ENCODE measurements at regions of chrX and their contacts with region 1.

Region 1: DNA sequence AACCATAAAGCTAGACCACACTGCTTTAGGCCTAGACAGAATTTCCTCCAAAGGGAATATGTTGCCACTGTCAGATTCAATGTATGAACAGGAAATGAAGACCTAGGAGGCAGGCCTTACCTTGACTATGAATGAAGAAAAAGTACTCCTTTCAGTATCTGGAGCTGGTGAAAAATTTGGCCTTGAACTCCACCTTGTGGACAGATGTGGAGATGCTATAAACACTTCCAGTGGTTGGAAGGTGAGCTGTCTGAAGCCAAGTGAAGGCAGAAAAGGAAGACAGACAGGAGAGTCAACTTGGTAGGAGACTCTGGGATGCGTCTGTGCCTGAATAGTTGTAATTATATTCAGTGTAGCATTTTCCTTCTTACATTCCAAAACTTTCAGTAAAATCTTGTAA is 17.2 kb downstream of the SPIN3 start:
- DNase-seq: peak; percentile 16
- H3K4me3 ChIP-seq: no peak overlapping the region
- H3K27ac ChIP-seq: no peak overlapping the region
- H3K4me1 ChIP-seq: no peaks in the 10 kb centered on the region
- H3K27me3 ChIP-seq: no peaks in the 10 kb centered on the region
- CTCF ChIP-seq: peak; percentile 35 to 54 (median 42)
- EP300 ChIP-seq: no peak
- POLR2A ChIP-seq: no peak

Region 2: DNA sequence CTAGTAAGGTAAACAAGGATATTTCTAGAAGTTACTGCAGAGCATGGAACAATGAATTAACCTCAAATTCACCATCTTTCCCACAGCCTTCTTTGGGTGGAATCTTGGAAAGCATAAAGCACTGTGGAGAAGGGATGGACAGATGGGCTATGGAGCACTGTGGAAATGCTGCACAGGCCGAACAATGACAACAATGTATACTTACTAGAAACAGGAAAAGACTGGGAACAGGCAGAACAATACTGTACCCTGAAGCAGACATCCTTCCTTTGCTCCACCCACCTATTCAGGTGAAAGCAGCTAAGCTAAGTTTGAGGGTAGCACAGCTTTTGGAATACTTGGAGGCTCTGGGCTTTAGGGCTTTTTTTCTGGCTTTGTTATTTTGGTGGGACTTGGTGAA is 996.6 kb before region 1 on chrX:
- in situ Hi-C with region 1: no loop called
- intact Hi-C with region 1: no loop called
- DNase-seq: no peak
- H3K4me3 ChIP-seq: no peak overlapping the region
- H3K27ac ChIP-seq: no peak overlapping the region
- H3K4me1 ChIP-seq: no peaks in the 10 kb centered on the region
- H3K27me3 ChIP-seq: no peaks in the 10 kb centered on the region
- CTCF ChIP-seq: no peak
- EP300 ChIP-seq: no peak
- POLR2A ChIP-seq: no peak

Region 3: DNA sequence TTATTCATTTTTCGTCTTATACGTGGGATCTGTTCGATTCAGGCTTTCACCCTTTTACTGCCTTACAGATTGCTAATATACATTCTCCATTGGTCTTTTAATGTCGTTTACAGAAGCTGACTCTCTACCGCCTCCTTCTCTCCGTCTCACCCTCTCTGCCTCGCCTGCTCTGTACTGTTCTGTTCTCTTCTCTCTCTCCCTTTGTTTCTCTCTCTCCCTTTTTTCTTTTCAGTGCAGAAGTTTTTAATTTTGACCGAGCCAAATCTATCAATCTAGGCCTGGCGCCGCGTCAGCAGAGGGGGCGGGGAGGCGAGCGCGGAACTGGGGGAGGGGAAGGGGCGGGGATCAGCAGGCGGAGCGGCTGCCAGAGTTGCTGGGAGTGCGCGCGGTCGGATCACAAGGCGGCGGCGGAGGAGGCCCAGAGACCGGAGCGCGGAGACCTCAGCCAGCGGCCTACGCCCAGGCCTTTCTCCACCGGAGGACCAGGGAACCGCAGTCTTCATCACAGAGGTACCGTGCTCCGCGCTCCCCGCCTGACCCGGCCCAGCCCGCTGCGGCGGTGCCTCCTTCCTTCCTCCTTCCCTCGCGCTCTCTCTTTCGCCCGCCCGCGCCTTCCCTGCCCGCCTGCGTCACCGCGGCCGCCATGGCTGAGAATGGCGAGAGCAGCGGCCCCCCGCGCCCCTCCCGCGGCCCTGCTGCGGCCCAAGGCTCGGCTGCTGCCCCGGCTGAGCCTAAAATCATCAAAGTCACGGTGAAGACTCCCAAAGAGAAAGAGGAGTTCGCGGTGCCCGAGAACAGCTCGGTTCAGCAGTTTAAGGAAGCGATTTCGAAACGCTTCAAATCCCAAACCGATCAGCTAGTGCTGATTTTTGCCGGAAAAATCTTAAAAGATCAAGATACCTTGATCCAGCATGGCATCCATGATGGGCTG is 414.7 kb before region 1 on chrX and contains the start of gene UBQLN2:
- in situ Hi-C with region 1: loop called in 1 of 4 experiments (anchors 25 kb)
- intact Hi-C with region 1: no loop called
- DNase-seq: peak; percentile 85
- H3K4me3 ChIP-seq: peak within 1 kb of the TSS; percentile 52 to 76 (median 64)
- H3K27ac ChIP-seq: peak within 1 kb of the TSS; percentile 92 to 98 (median 96)
- H3K4me1 ChIP-seq: peaks cover 0 to 16% (median 12%) of the 10 kb centered on the region in 4 donors
- H3K27me3 ChIP-seq: no peaks in the 10 kb centered on the region
- CTCF ChIP-seq: no peak
- EP300 ChIP-seq: no peak
- POLR2A ChIP-seq: peak; percentile 83
- total RNA-seq, gene UBQLN2: 10.0 to 20.6 (median 19.2) TPM

Region 4: DNA sequence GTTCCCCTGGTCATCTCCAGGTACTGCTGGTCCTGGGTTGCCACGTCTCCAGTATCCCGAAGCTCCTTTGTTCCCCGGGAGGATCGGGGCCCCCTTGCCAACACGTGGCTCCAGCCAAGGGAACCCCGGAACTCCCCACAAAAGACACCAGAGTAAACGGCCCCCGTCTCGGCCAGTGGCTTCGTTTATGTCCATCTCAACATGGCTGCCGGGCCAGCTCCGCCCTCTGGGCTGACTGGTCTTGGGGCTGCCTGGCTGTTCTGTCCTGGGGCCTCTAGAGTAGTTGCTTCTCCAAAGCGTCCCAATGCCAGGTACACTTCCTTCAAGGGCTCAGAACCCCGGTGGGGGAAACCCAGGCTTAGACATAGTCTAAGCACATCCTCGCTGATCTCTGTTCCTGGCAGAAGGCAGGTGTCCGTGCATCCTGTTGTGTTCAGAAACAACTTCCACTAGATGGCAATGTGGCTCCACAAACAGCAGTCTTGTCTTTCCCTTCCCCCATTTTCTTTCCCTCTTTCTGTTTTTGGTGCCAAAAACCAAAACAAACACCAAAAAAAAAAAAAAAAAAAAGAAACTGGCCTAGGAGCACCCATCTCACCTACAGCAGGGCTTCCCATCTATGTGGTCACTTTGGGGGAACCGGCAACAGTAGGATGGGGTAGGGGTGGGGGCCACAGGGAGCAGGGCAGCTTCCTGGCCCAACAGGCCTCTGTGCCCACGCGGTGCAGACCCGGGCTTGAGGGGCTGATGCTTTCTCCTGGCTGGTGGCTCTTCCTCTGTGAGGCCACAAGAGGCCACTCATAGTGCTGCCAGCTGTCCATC is 213.8 kb before region 1 on chrX:
- in situ Hi-C with region 1: loop called in 2 of 4 experiments (anchors 25 kb)
- intact Hi-C with region 1: no loop called
- DNase-seq: peak; percentile 83
- H3K4me3 ChIP-seq: peak overlapping the region in 2 of 4 donors; percentile 35 to 44
- H3K27ac ChIP-seq: peak overlapping the region in 3 of 4 donors; percentile 32 to 89 (median 64)
- H3K4me1 ChIP-seq: peaks cover 0 to 9% (median 7%) of the 10 kb centered on the region in 4 donors
- H3K27me3 ChIP-seq: no peaks in the 10 kb centered on the region
- CTCF ChIP-seq: peak; percentile 31 to 70 (median 37)
- EP300 ChIP-seq: no peak
- POLR2A ChIP-seq: no peak

Region 5: GRCh38 chrX:56788717-56789122 is 189.5 kb before region 1 on chrX:
- in situ Hi-C with region 1: loop called in 1 of 4 experiments (anchors 25 kb)
- intact Hi-C with region 1: no loop called
- DNase-seq: peak; percentile 56
- H3K4me3 ChIP-seq: no peak overlapping the region
- H3K27ac ChIP-seq: no peak overlapping the region
- H3K4me1 ChIP-seq: no peaks in the 10 kb centered on the region
- H3K27me3 ChIP-seq: no peaks in the 10 kb centered on the region
- CTCF ChIP-seq: peak in 3 of 5 experiments; percentile 15 to 32 (median 25)
- EP300 ChIP-seq: no peak
- POLR2A ChIP-seq: no peak

Region 6: DNA sequence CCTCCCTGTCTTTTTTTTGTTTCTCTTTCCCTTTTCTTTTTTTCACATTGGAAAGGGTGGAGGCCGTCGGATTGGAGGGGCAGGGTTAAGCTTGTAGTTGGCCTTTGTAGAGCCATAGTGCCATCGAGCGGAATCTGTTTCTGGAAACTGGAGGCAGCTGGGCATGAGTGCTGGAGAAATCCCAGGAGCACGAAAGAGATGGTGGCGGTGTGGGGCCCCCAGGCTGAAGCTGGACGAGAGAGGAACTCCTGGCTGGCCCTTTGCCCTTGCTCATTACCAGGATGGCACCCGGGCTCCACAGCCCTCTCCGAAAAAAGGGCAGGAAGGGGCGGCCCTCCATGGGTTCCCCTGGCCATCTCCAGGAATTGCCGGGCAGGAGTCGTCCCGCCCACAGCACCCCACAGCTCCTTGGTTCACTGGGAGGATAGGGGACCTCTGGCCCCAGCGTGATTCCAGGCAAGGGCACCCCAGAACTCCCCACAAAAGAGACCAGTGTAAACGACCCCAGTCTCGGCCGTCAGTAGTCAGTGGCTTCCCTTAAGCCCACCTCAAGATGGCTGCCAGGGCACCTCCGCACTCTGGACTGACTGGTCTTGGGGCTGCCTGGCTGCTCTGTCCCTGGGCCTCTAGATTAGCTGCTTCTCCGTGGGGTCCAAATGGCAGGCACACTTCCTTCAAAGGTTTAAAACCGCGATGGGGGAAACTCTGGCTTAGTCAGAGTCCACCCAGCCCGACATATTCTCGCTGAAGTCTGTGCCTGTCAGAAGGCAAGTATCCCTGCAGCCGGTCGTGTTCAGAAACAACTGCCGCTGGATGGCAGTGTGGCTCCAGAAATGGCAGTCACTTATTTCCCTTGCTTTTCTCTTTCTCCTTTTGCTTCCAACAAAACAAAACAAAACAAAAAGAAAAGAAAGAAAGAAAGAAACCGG is 175.0 kb before region 1 on chrX:
- in situ Hi-C with region 1: loop called in 2 of 4 experiments (anchors 25 kb)
- intact Hi-C with region 1: no loop called
- DNase-seq: peak; percentile 83
- H3K4me3 ChIP-seq: peak overlapping the region in 2 of 4 donors; percentile 32 to 43
- H3K27ac ChIP-seq: peak overlapping the region in 2 of 4 donors; percentile 62 to 67
- H3K4me1 ChIP-seq: no peaks in the 10 kb centered on the region
- H3K27me3 ChIP-seq: no peaks in the 10 kb centered on the region
- CTCF ChIP-seq: peak in 1 of 5 experiments; percentile 47
- EP300 ChIP-seq: no peak
- POLR2A ChIP-seq: no peak

Measured in transverse colon (tissue), 4 donors.